ENCODE measurements at regions of chr1 and their contacts with region 1.

Region 1: GRCh38 chr1:64469977-64470664 is at the start of gene CACHD1:
- DNase-seq: peak; percentile 88 to 89
- H3K4me3 ChIP-seq: peak within 1 kb of the TSS; percentile 69 to 75 (median 73)
- H3K27ac ChIP-seq: peak within 1 kb of the TSS; percentile 70 to 87 (median 82)
- H3K4me1 ChIP-seq: peaks cover 18 to 32% of the 10 kb centered on the region in 2 donors
- H3K27me3 ChIP-seq: no peaks in the 10 kb centered on the region
- CTCF ChIP-seq: peak in 5 of 6 experiments; percentile 36 to 68 (median 55)
- POLR2A ChIP-seq: peak in 1 of 2 donors; percentile 91
- total RNA-seq, gene CACHD1: 12.9 to 25.1 (median 17.0) TPM

Region 2: GRCh38 chr1:64363111-64363510 is 107.0 kb before region 1 on chr1:
- intact Hi-C with region 1: no loop called
- DNase-seq: no peak
- H3K4me3 ChIP-seq: no peak overlapping the region
- H3K27ac ChIP-seq: no peak overlapping the region
- H3K4me1 ChIP-seq: no peaks in the 10 kb centered on the region
- H3K27me3 ChIP-seq: no peaks in the 10 kb centered on the region
- CTCF ChIP-seq: no peak
- POLR2A ChIP-seq: no peak

Region 3: DNA sequence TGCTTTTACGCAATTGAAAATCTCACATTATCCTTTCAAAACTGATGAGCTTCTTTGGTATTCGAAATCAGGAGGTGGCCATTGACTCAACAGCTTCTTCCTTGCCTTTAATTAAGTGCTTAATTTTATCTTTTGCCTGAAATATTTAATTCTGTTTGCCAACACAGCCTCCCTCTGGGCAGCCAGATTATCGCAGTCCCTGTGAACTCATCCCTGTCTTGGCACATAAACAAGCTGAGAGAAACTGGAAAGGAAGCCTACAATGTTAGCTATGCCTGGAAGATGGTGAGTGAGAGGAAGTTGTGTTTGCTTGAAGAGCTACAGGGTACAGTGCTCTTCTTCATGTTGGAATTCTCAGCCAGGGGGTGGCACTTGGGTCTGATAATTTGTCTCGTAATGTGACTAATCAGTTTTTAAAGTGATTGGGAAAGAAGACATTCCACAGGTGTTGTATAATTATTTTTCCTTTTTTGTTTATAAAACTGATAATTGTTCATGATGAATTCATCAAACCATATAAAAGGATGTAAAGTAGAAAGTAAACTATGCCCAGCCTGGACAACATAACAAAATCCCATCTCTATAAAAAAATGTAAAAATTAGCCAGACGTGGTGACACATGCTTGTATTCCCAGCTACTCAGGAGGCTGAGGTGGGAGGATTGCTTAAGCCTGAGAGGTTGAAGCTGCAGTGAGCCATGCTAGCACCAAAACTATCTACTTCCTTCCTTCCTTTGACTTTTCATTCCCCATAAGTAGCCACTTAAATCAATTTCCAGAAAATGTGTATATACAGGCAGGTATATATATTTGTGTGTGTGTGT is 184.6 kb after region 1 on chr1:
- intact Hi-C with region 1: loop called (anchors 10 kb)
- DNase-seq: peak; percentile 8 to 12
- H3K4me3 ChIP-seq: no peak overlapping the region
- H3K27ac ChIP-seq: no peak overlapping the region
- H3K4me1 ChIP-seq: no peaks in the 10 kb centered on the region
- H3K27me3 ChIP-seq: no peaks in the 10 kb centered on the region
- CTCF ChIP-seq: peak in 3 of 6 experiments; percentile 18 to 34 (median 23)
- POLR2A ChIP-seq: no peak

Region 4: GRCh38 chr1:64675718-64676345 is 205.7 kb after region 1 on chr1:
- intact Hi-C with region 1: loop called (anchors 10 kb)
- DNase-seq: no peak
- H3K4me3 ChIP-seq: no peak overlapping the region
- H3K27ac ChIP-seq: no peak overlapping the region
- H3K4me1 ChIP-seq: peaks cover 0 to 5% of the 10 kb centered on the region in 2 donors
- H3K27me3 ChIP-seq: no peaks in the 10 kb centered on the region
- CTCF ChIP-seq: peak; percentile 30 to 73 (median 52)
- POLR2A ChIP-seq: no peak

Measured in thyroid gland (tissue), 4 donors.